HepG2 (cell line): ENCODE measurements at regions of chr3 and their contacts with region 1.

Region 1: DNA sequence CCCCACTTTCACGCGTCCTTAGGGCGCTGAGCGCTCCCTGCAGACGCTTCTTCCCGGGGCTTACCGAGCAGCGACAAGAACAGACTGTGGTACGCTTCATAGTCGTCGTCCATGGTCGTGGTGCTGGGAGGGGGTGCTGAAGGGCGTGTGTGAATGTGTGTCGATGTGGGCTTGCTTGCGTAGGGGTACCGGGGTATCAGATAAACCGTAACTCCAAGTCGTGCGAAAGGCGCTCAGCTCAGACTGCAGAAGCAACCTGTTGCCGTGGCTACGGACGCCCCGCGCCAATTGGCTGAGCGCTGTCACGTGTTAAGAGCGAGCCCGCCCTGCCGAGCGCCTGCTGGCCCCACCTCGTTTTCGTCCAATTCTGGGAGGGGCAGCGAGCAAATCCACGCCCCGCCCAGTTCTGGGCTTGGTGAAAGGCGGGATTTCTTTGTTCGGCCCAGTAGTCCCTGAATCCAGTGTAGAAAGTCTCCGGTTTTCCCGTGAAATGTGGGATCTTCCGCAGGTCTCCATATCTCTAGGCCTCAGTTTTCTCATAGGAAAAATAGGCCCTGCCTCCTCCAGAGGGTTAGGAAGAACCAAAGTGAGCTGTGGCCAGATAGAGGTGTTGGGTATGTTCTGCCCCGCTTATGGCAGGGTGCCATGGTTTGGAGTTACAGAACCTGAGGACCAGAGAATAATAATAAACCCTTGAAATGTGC is at the start of gene EFCAB12:
- DNase-seq: peak; percentile 77
- ATAC-seq: peak; percentile 96
- H3K4me3 ChIP-seq: peak within 1 kb of the TSS; percentile 56 to 75 (median 56); a peak in 5 of 6 replicates
- H3K27ac ChIP-seq: peak within 1 kb of the TSS; percentile 41
- H3K4me1 ChIP-seq: peaks cover 56% of the 10 kb centered on the region
- H3K27me3 ChIP-seq: peaks cover 0 to 4% of the 10 kb centered on the region in 2 experiments; a peak in 2 of 5 replicates
- CTCF ChIP-seq: peak; percentile 44
- EP300 ChIP-seq: no peak
- POLR2A ChIP-seq: peak in 1 of 2 experiments; percentile 47; a peak in 3 of 4 replicates
- RAD21 ChIP-seq: no peak
- total RNA-seq, gene EFCAB12: 0.11 and 0.31 TPM in 2 replicates

Region 2: DNA sequence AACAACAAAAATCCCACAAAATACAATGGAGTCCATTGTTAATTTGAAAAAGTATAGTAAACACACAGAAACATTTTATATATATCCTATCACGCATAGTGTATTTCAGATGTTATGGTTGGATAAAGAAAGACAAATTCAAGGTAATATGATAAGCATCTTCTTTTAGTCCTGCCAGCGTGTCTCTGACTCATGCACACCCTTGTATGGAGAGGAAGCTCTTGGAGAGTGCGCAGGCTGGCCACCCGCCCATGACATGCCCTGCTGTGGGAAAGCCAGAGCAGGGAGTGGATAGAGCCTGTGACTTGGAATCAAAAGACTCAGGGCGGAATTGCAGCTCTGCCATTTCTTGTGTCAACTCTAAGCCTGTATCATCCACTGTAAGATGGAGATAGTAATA is 202.2 kb before region 1 on chr3:
- CTCF ChIA-PET with region 1: no interaction called
- POLR2A ChIA-PET with region 1: no interaction called
- in situ Hi-C with region 1: no loop called
- intact Hi-C with region 1: no loop called
- DNase-seq: no peak
- ATAC-seq: no peak
- H3K4me3 ChIP-seq: no peak overlapping the region
- H3K27ac ChIP-seq: no peak overlapping the region
- H3K4me1 ChIP-seq: peaks cover 71% of the 10 kb centered on the region
- H3K27me3 ChIP-seq: no peaks in the 10 kb centered on the region
- CTCF ChIP-seq: no peak
- EP300 ChIP-seq: no peak
- POLR2A ChIP-seq: no peak
- RAD21 ChIP-seq: no peak

Region 3: GRCh38 chr3:129278439-129278970 is 150.0 kb before region 1 on chr3 and contains the start of gene HMCES:
- CTCF ChIA-PET with region 1: no interaction called
- POLR2A ChIA-PET with region 1: no interaction called
- in situ Hi-C with region 1: no loop called
- intact Hi-C with region 1: loop called (anchors 5 kb)
- DNase-seq: peak; percentile 80
- ATAC-seq: peak; percentile 88
- H3K4me3 ChIP-seq: peak within 1 kb of the TSS; percentile 72 to 98 (median 78)
- H3K27ac ChIP-seq: peak within 1 kb of the TSS; percentile 90
- H3K4me1 ChIP-seq: peaks cover 44% of the 10 kb centered on the region
- H3K27me3 ChIP-seq: no peaks in the 10 kb centered on the region; a peak in 1 of 5 replicates
- CTCF ChIP-seq: peak; percentile 12; the same call in 1 of the 2 replicates
- EP300 ChIP-seq: no peak
- POLR2A ChIP-seq: peak in 1 of 2 experiments; percentile 70; a peak in 1 of 4 replicates
- RAD21 ChIP-seq: no peak
- total RNA-seq, gene HMCES: 37.5 and 52.4 TPM in 2 replicates

Region 4: GRCh38 chr3:129399145-129399894 is 29.2 kb before region 1 on chr3:
- CTCF ChIA-PET with region 1: no interaction called
- POLR2A ChIA-PET with region 1: interaction called, 10 read pairs
- in situ Hi-C with region 1: no loop called
- intact Hi-C with region 1: no loop called
- DNase-seq: peak; percentile 95
- ATAC-seq: peak; percentile 74
- H3K4me3 ChIP-seq: peak overlapping the region; percentile 61 to 86 (median 85)
- H3K27ac ChIP-seq: peak overlapping the region; percentile 87
- H3K4me1 ChIP-seq: peaks cover 75% of the 10 kb centered on the region
- H3K27me3 ChIP-seq: no peaks in the 10 kb centered on the region; a peak in 1 of 5 replicates
- CTCF ChIP-seq: peak; percentile 84
- EP300 ChIP-seq: peak in 1 of 2 experiments; percentile 100; a peak in 1 of 4 replicates
- POLR2A ChIP-seq: no peak
- RAD21 ChIP-seq: peak; percentile 23; the same call in 1 of the 2 replicates

Region 5: DNA sequence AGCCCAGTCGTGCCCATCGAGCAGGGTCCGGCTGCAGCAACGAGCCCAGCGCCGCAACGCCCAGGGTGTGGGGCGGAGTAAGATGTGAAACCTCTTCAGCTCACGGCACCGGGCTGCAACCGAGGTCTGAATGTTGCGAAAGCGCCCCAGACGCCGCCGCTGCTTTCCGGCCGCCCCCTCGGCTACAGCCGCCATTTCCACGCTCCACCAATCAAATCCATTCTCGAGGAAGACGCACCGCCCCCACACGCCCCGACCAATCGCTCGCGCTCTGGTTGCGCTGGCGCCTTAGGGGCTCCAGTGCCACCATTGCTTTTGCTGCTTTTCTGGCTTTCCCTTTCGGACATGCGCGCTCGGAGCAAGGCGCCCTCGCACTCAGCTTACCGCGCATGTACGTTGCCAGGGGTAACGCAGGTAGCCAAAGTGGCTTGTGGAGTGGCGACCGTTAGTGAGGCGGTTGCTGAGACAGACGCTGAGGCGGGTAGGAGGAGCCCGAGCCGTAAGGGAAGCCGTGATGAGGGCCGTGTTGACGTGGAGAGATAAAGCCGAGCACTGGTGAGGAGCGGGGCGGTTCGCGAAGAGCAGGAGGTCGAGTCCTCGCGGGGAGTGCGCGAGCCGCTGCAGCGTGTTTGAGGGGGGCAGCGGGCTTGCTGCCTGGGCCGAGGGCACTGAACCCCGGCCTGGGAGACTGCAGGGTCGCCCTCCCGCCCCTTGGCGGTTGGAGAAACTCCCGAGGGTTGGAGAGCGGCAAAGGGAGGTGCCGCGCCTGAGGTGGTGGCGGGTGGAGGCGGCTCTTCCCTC is 11.5 kb after region 1 on chr3 and contains the starts of genes IFT122 and MBD4:
- CTCF ChIA-PET with region 1: no interaction called
- POLR2A ChIA-PET with region 1: interaction called, 26 read pairs
- in situ Hi-C with region 1: no loop called
- intact Hi-C with region 1: no loop called
- DNase-seq: peak; percentile 97
- ATAC-seq: peak; percentile 96
- H3K4me3 ChIP-seq: peak within 1 kb of the TSS; percentile 86 to 96 (median 90)
- H3K27ac ChIP-seq: peak within 1 kb of the TSS; percentile 75
- H3K4me1 ChIP-seq: peaks cover 55% of the 10 kb centered on the region
- H3K27me3 ChIP-seq: no peaks in the 10 kb centered on the region; a peak in 1 of 5 replicates
- CTCF ChIP-seq: no peak
- EP300 ChIP-seq: 0 out of 4 replicates have a peak, but pooled peaks of 1 of the 2 experiments have one; percentile 14
- POLR2A ChIP-seq: peak; percentile 64 to 69
- RAD21 ChIP-seq: 0 out of 2 replicates have a peak, but pooled peaks have one; percentile 34
- total RNA-seq, gene IFT122: 10.3 and 10.8 TPM in 2 replicates
- total RNA-seq, gene MBD4: 25.3 and 26.9 TPM in 2 replicates

Region 6: DNA sequence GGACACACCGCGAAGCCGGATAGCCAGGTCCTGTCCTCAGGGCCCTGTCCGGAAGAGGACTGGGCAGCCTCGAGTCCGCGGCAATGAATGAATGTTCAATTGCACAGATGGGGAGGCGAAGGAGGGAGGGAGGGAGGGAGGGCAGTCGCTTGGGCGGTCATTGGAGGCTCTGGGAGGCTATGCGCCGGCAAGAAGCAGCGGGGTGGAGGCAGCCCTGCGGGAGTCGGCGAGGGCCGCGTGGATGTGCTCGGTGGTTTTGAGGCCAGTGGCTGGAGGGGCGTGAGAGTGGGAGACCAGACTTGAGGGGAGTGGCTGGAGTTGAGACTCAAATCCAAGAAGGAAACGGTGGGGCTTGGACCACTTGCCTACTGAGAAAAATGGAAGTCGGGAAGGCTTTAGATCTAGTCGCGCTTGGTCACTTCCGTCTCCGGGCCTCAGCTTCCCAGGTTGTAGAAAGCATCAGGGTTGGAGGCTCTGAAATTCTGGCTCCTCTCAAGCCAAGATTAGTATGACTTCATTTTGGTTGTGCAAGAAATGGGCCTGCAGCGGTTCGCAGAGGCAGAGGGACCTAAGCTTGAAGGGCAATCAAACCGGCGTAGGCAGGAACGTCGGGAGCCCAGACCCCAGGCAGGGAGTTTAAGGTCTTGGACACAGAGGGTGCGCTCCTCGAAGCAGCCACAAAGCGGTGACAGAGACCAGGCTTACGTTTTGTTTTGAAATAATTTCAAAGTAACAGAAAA is 199.1 kb after region 1 on chr3:
- CTCF ChIA-PET with region 1: no interaction called
- POLR2A ChIA-PET with region 1: no interaction called
- in situ Hi-C with region 1: no loop called
- intact Hi-C with region 1: no loop called
- DNase-seq: peak; percentile 77
- ATAC-seq: peak; percentile 48
- H3K4me3 ChIP-seq: peak overlapping the region; percentile 67 to 97 (median 76)
- H3K27ac ChIP-seq: peak overlapping the region; percentile 95
- H3K4me1 ChIP-seq: peaks cover 63% of the 10 kb centered on the region
- H3K27me3 ChIP-seq: no peaks in the 10 kb centered on the region; a peak in 1 of 5 replicates
- CTCF ChIP-seq: peak; percentile 87
- EP300 ChIP-seq: no peak
- POLR2A ChIP-seq: peak in 1 of 2 experiments; percentile 61; a peak in 2 of 4 replicates
- RAD21 ChIP-seq: peak; percentile 92